A549 (cell line): ENCODE measurements at regions of chr12 and their contacts with region 1.

Region 1: DNA sequence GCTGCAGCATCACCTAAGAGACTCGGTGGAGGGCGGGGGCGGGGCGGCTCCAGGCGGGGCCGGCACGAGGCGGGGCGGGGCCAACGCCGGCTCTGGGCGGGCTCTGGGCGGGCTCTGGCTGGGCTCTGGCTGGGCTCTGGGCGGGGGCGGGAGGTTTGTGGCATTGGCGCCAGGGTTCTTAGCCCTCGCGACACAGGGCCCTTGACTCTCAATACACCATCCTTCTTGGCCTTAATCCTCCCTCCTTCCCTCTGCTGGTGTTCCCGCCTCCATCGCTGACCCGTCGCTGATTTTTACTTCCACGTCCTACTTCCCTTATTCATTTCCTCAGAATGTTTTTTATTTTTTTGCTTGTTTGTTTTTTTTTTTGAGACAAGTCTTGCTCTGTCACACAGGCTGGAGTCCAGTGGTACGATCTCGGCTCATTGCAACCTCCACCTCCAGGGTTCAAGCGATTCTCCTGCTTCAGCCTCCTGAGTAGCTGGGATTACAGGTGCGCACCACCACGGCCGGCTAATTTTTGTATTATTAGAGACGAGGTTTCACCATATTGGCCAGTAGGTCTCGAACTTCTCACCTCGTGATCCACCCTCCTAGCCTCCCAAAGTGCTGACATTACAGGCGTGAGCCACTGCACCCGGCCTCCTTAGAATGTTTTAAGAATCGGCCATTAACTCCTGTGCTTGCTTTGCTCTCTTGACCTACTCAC is at the start of gene BLTP3B:
- DNase-seq: peak; percentile 61 to 86
- ATAC-seq: peak; percentile 87 to 94
- H3K4me3 ChIP-seq: peak within 1 kb of the TSS; percentile 96
- H3K27ac ChIP-seq: peak within 1 kb of the TSS; percentile 98 to 100
- H3K4me1 ChIP-seq: peaks cover 34% of the 10 kb centered on the region
- CTCF ChIP-seq: no peak
- EP300 ChIP-seq: no peak
- POLR2A ChIP-seq: no peak
- RAD21 ChIP-seq: no peak
- polyA plus RNA-seq, gene BLTP3B: 30.1 and 38.8 TPM in 2 replicates

Region 2: DNA sequence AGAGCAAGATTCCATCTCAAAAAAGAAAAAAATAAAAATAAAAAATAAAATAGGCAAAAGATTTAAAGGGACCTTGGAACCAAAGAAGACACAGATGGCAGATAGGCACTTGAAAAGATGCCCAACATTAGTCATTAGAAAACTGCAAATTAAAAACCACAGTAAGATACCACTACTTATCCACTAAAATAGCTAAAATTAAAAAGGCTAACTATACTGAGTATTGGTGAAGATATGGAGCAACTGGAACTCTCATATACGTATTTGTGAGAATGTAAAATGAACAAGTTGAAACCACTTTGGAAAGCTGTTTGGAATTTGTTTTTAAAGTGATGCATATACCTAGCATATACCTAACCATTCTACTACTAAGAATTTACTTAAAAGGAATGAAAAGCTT is 22.6 kb before region 1 on chr12:
- CTCF ChIA-PET with region 1: interaction called, 11 read pairs
- POLR2A ChIA-PET with region 1: no interaction called
- DNase-seq: no peak
- ATAC-seq: no peak
- H3K4me3 ChIP-seq: no peak overlapping the region
- H3K27ac ChIP-seq: no peak overlapping the region
- H3K4me1 ChIP-seq: no peaks in the 10 kb centered on the region
- CTCF ChIP-seq: no peak
- EP300 ChIP-seq: no peak
- POLR2A ChIP-seq: no peak
- RAD21 ChIP-seq: no peak

Region 3: DNA sequence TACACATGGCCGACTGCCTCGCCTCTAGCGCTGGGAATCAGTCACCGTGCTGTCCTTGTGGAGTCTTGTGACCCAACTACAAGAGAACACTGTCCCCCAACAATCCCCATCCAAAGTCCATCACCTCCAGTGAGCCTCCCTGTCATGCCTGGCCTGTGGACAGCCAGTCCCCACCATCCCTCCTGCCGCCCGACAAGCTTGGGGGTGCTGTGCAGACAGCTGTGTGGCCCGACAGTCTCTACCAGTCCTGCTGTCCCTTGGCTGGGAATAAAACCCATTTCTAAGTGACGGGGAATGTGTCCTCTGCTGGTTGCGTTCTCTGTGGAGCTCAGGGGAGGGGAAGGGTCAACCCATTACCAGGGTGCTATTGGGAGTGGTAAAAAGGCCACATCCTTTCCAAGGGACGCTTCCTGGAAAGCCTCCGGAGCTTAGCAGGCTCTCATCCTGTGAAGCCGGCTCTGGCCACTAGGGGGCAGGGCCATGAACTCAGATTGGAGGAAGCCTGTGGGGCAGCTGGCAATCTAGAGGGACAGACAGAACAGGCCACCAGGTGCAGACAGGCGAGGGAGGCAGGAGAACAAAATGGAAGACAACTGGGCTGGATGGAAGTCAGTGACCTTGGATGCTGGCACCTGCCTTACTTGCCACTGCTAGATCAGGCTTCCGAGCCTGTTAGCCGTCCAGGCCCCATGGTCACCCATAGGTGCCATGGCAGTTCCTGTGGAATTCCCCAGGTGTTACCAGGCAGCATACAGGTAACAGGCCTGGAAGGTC is 11.7 kb after region 1 on chr12:
- CTCF ChIA-PET with region 1: interaction called, 15 read pairs
- POLR2A ChIA-PET with region 1: no interaction called
- DNase-seq: peak; percentile 84 to 85
- ATAC-seq: peak; percentile 79 to 92
- H3K4me3 ChIP-seq: no peak overlapping the region
- H3K27ac ChIP-seq: no peak overlapping the region
- H3K4me1 ChIP-seq: no peaks in the 10 kb centered on the region
- CTCF ChIP-seq: peak; percentile 76
- EP300 ChIP-seq: no peak
- POLR2A ChIP-seq: no peak
- RAD21 ChIP-seq: peak in 1 of 2 experiments; percentile 61; a peak in 3 of 5 replicates